Activated naive CD8-positive, alpha-beta T cell treated with anti-CD3 and anti-CD28 coated beads, Interleukin-2, amount 10 ng/mL, durations not matched to agents 7 days and 5 days (primary cell): ENCODE measurements at regions of chr11 and their contacts with region 1.

Region 1: DNA sequence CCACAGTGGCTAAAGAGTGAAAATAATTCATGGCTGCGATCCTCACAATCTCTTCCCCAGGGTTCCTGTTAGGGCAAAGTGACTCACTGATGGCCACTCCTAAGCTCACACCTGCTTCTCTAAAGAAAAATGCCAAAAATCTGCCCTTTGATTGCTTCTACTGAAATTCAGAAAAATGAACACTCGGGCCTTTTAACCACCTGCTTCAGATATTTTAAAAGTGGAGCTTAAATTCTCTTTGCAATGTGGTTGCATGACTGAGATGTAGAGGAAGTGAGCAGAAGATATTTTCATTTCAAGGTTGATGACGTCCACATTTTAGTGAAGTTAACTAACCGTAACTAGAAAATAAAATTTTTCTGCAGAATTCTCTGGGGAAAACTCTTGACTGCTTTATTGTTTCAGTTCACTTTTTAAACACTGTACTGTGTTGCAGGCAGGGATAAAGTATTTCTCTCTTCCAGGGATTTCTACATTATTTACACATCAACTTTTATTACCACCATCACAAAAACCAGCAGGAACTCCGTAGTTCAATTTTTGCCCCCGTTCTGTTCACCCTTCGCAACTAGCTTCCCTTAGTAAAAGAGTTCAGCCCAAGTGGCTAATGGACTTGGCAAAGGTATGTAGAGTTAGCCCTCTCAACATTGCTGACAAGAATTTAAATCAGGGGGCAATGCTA is 8.5 kb downstream of the RAB30 start:
- DNase-seq: no peak
- ATAC-seq: peak; percentile 78
- H3K4me3 Mint-ChIP-seq: peak overlapping the region; percentile 83
- H3K27ac Mint-ChIP-seq: peak overlapping the region; percentile 97
- H3K4me1 Mint-ChIP-seq: peaks cover 22% of the 10 kb centered on the region
- H3K27me3 Mint-ChIP-seq: no peaks in the 10 kb centered on the region

Region 2: DNA sequence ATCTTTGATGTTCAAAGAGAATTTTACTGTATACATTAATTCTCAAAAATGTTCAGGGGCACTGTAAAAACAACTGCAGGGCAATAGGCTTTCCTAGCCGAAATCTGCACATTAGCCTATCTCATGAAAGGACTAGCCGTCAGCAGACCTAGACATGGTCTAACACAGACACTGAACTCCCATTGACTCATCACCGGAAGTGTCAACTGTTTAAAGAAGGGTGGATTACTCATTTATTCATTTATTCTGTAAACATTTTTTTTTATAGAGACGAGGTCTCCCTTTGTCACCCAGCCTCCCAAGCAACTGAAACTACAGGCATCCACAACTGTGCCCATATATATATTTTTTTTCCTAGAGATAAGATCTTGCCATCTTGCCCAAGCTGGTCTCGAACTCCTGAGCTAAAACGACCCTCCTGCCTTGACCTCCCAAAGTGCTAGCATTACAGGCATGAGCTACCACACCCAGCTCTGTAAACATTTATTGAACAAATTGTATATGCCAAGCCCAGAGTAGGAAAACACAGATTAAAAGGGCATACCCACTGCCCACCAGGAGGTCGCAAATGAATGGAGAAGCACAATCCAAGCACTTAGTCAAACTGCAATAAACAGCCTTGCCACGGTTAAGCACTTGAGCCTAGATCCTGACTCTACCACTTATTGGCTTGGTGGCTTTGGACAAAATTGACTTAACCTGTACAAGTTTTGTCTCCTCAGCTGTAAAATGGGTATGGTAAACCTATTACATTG is 18.1 kb before region 1 on chr11:
- POLR2A ChIA-PET with region 1: interaction called, 10 read pairs
- DNase-seq: no peak
- ATAC-seq: no peak
- H3K4me3 Mint-ChIP-seq: no peak overlapping the region
- H3K27ac Mint-ChIP-seq: no peak overlapping the region
- H3K4me1 Mint-ChIP-seq: peaks cover 8% of the 10 kb centered on the region
- H3K27me3 Mint-ChIP-seq: no peaks in the 10 kb centered on the region

Region 3: GRCh38 chr11:83092488-83093384 is 29.5 kb after region 1 on chr11:
- POLR2A ChIA-PET with region 1: no interaction called
- DNase-seq: no peak
- ATAC-seq: no peak
- H3K4me3 Mint-ChIP-seq: no peak overlapping the region
- H3K27ac Mint-ChIP-seq: no peak overlapping the region
- H3K4me1 Mint-ChIP-seq: peaks cover 2% of the 10 kb centered on the region
- H3K27me3 Mint-ChIP-seq: no peaks in the 10 kb centered on the region

Region 4: GRCh38 chr11:83187465-83187864 is 124.3 kb after region 1 on chr11:
- POLR2A ChIA-PET with region 1: no interaction called
- DNase-seq: no peak
- ATAC-seq: no peak
- H3K4me3 Mint-ChIP-seq: no peak overlapping the region
- H3K27ac Mint-ChIP-seq: no peak overlapping the region
- H3K4me1 Mint-ChIP-seq: peaks cover 13% of the 10 kb centered on the region
- H3K27me3 Mint-ChIP-seq: no peaks in the 10 kb centered on the region